PC-9 (cell line): ENCODE measurements at regions of chr3 and their contacts with region 1.

Region 1: DNA sequence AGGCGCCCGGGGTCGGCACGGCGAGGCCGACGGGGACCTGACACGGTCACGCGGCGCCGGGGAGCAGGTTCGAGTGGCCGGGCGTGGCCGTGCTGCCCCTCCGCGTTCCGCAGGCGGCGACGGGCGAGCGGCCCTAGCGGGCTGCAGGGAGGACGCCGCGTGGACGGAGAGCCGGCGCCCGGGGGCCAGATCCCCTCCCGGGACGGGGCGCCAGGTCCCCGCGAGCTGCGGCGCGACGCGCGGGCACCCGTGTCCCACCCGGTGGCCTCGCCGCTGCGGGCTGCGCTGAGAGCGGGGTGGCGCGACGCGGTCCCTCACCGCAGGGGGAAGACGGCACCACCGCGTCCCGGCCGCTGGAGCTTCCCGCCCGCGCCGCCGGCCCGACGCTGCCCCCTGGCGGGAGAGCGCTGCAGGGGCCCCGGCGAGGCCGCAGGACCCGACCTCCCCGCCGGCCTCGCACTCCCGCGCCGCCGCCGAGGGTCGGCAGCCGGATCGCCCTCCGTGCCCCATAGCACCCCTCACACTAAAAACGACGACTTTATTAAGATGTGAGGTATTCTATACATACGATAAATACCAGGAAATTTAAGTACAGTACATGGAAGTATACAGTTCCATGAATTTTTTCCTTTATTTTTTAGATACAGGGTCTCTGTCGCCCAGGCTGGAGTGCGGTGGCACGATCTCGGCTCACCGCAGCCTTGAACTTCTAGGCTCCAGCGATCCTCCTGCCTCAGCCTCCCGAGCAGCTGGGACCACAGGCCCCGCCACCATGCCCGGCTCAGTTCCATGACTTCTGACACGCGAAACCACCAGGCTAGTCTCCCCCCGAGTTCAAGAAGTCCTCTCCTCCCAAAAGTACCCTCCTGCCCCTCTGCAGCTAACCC is 1.3 kb upstream of the PIGZ start:
- DNase-seq: peak in 1 of 2 experiments; percentile 80
- H3K4me3 ChIP-seq: peak overlapping the region; percentile 73; the same call in 1 of the 2 replicates
- H3K27ac ChIP-seq: no peak overlapping the region
- H3K4me1 ChIP-seq: no peaks in the 10 kb centered on the region
- H3K27me3 ChIP-seq: peaks cover 22% of the 10 kb centered on the region
- CTCF ChIP-seq: peak; percentile 72

Region 2: DNA sequence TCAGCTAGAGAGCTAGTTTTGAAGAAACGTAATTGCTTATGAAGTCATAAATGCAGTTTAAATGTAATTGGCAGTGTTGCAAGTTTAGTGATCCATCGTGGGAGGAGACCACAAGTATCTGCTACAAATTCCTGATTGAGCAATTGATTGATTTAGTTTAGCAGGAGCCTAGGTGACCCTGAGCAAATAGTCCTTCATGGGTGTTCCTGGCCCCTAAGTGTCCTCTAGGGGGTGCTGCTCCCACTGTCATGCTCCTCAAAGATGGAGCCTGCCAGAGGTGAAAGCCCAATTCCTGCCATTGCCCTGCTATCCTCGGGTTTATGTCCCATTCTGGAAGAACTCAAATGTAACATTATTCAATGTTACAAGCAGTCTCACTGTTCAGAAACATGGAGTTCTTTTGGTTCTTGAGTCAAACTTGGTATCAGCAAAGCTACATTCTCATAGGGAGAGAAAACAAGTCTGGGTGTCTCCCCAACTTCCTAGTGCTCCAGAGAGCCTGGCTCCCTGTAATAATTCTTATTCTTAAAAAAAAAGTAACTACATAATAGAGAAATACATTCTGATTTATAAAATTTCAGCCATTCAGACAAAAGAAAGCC is 132.0 kb before region 1 on chr3:
- CTCF ChIA-PET with region 1: no interaction called
- POLR2A ChIA-PET with region 1: no interaction called
- intact Hi-C with region 1: loop called (anchors 1 kb)
- DNase-seq: peak; percentile 50 to 55
- H3K4me3 ChIP-seq: no peak overlapping the region
- H3K27ac ChIP-seq: no peak overlapping the region
- H3K4me1 ChIP-seq: no peaks in the 10 kb centered on the region
- H3K27me3 ChIP-seq: no peaks in the 10 kb centered on the region
- CTCF ChIP-seq: peak; percentile 82

Region 3: GRCh38 chr3:197000211-197000610 is 30.3 kb after region 1 on chr3:
- CTCF ChIA-PET with region 1: no interaction called
- POLR2A ChIA-PET with region 1: no interaction called
- intact Hi-C with region 1: no loop called
- DNase-seq: no peak
- H3K4me3 ChIP-seq: no peak overlapping the region
- H3K27ac ChIP-seq: no peak overlapping the region
- H3K4me1 ChIP-seq: no peaks in the 10 kb centered on the region
- H3K27me3 ChIP-seq: no peaks in the 10 kb centered on the region
- CTCF ChIP-seq: no peak

Region 4: GRCh38 chr3:197111685-197112084 is 141.8 kb after region 1 on chr3:
- CTCF ChIA-PET with region 1: no interaction called
- POLR2A ChIA-PET with region 1: no interaction called
- intact Hi-C with region 1: no loop called
- DNase-seq: no peak
- H3K4me3 ChIP-seq: no peak overlapping the region
- H3K27ac ChIP-seq: no peak overlapping the region
- H3K4me1 ChIP-seq: peaks cover 4% of the 10 kb centered on the region
- H3K27me3 ChIP-seq: no peaks in the 10 kb centered on the region
- CTCF ChIP-seq: no peak

Region 5: GRCh38 chr3:197181741-197182140 is 211.8 kb after region 1 on chr3:
- CTCF ChIA-PET with region 1: interaction called, 12 read pairs
- POLR2A ChIA-PET with region 1: no interaction called
- intact Hi-C with region 1: no loop called
- DNase-seq: no peak
- H3K4me3 ChIP-seq: no peak overlapping the region
- H3K27ac ChIP-seq: no peak overlapping the region
- H3K4me1 ChIP-seq: no peaks in the 10 kb centered on the region
- H3K27me3 ChIP-seq: no peaks in the 10 kb centered on the region
- CTCF ChIP-seq: no peak